GM10248 (cell line): ENCODE measurements at regions of chr1 and their contacts with region 1.

Region 1: DNA sequence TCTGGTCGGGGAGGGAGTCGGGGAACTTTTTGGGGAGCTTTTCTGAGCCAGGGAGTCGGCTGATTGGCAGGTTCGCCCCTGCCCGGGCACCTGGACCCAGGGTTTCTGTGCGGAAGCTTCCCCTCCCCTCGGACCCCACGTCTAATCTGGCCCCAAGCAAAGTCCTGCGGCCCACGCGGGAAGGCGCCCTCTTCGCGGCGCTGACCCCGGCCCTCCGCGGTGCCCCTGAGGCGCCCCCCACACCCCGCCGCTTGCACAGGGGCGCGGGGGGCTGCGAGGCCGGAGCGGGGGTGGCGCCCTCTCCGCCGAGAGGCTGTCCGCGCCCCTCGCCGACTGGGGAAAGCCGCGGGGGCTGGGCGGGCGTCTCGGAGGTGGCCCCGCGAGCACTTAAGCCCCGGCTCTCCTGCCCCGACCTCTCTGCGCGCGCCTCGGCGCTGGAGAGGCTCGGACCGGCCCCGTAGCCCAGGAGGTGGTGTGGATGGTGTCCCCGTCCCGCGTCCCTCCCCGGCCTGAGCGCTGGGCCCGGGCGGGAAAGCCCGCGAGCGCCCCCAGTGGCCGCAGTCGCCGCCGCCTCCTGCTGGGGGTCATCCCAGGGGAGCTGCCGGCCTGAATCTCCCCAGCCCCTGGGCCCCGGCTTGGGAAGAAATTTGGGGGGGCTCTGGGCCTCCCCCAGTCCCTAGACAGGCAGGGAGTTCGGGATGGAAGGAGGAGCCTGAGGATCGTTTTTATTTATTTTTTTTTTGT is 1.7 kb upstream of the HES4 start:
- DNase-seq: peak; percentile 90
- CTCF ChIP-seq: peak; percentile 93

Region 2: GRCh38 chr1:1013105-1013921 is 11.7 kb after region 1 on chr1 and contains the start of gene ISG15:
- CTCF ChIA-PET with region 1: interaction called, 23 read pairs
- POLR2A ChIA-PET with region 1: no interaction called
- DNase-seq: peak; percentile 83
- CTCF ChIP-seq: no peak

Region 3: GRCh38 chr1:1019122-1019999 is 17.7 kb after region 1 on chr1:
- CTCF ChIA-PET with region 1: interaction called, 23 read pairs
- POLR2A ChIA-PET with region 1: no interaction called
- DNase-seq: peak; percentile 95
- CTCF ChIP-seq: peak; percentile 73